ENCODE measurements at regions of chr4 and their contacts with region 1.

Region 1: GRCh38 chr4:2393353-2394270 is 24.8 kb downstream of the ZFYVE28 start:
- DNase-seq: peak; percentile 69
- H3K4me3 ChIP-seq: peak overlapping the region; percentile 15
- H3K27ac ChIP-seq: no peak overlapping the region
- H3K4me1 ChIP-seq: peaks cover 24% of the 10 kb centered on the region
- CTCF ChIP-seq: peak; percentile 38

Region 2: DNA sequence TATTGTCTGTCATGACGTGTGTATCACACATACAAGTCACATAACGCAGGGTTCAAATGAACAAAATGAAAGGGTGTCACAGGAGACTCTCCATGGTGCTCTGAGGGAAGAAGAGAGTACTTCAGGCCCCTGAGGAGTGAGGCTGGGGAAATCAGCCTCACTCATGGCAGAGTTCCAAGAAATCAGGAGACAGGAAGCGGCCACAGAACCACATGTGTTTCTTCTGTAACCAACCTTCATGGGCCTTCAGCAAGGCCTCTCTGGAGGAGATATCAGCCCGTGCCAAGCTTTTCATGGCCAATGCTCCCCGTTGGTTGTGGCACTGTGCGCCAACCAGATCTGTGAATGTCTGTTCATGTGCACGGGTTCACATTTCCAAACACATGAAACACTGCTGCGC is 258.5 kb before region 1 on chr4:
- CTCF ChIA-PET with region 1: no interaction called
- POLR2A ChIA-PET with region 1: no interaction called
- intact Hi-C with region 1: no loop called
- DNase-seq: no peak
- H3K4me3 ChIP-seq: no peak overlapping the region
- H3K27ac ChIP-seq: no peak overlapping the region
- H3K4me1 ChIP-seq: no peaks in the 10 kb centered on the region
- CTCF ChIP-seq: no peak

Region 3: DNA sequence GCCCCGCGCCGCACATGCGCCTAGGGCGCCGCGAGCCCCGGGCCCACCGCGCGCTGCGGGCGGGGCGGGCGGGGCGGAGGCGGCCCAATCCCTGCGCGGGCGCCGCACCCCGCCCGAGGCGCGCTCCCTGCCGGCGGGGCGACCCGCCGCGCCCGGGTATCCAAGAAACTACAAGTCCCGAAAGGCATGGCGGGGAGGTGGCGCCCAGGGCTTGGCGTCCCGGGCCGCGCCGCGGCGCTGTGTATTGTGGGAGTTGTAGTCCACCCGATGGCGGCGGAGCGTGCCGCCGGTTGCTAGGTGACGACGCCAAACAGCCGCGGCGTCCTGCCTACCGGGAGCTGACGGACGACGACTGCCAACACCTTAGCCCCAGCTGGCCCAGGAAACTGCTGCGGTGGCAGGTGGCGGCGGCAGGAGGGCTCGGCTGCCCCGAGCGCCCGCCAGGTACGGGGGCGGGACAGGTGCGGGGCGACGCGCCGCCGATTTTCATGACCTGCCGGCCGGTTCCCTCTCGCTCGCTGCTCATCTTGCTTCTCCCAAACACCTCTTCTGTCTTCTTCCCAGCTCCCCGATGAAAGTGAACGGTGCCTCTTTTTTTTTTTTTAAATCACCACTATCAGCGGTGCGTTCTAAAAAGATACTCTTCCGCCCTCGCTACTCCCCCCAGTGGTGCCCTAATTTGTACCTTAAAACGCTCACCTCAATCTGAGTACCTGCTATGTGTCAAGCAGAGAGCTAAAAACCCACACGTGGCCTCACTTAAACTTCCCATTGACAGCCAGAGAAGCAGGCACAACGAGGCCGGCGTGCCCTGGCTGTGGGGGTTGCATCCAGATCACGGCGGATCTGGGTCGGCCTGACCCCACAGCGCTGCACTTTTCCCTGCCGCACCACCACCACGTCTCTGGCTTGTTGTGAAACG is 25.3 kb after region 1 on chr4 and contains the start of gene CFAP99:
- CTCF ChIA-PET with region 1: no interaction called
- POLR2A ChIA-PET with region 1: interaction called, 3 read pairs
- intact Hi-C with region 1: loop called (anchors 1 kb)
- DNase-seq: peak; percentile 96
- H3K4me3 ChIP-seq: peak within 1 kb of the TSS; percentile 66
- H3K27ac ChIP-seq: no peak within 1 kb of the TSS
- H3K4me1 ChIP-seq: peaks cover 19% of the 10 kb centered on the region
- CTCF ChIP-seq: peak; percentile 54
- total RNA-seq, gene CFAP99: not detected in 2 replicates